CD4-positive, alpha-beta memory T cell (primary cell): ENCODE measurements at regions of chr6 and their contacts with region 1.

Region 1: GRCh38 chr6:29964887-29965562 is 22.7 kb downstream of the HLA-A start:
- DNase-seq: peak; percentile 77 to 94 (median 84)
- H3K4me3 ChIP-seq: peak overlapping the region; percentile 24 to 57
- H3K4me3 Mint-ChIP-seq: peak overlapping the region; percentile 82 to 96 (median 89)
- H3K27ac ChIP-seq: peak overlapping the region; percentile 65
- H3K27ac Mint-ChIP-seq: peak overlapping the region; percentile 89 to 99 (median 93)
- H3K4me1 ChIP-seq: peaks cover 50% of the 10 kb centered on the region
- H3K4me1 Mint-ChIP-seq: peaks cover 37 to 54% (median 46%) of the 10 kb centered on the region in 4 donors
- H3K27me3 ChIP-seq: no peaks in the 10 kb centered on the region
- H3K27me3 Mint-ChIP-seq: no peaks in the 10 kb centered on the region

Region 2: GRCh38 chr6:29723262-29723665 is 241.8 kb before region 1 on chr6 and contains the start of gene HLA-F:
- CTCF ChIA-PET with region 1: no interaction called
- POLR2A ChIA-PET with region 1: no interaction called
- intact Hi-C with region 1: loop called (anchors 5 kb)
- DNase-seq: peak; percentile 88 to 91 (median 90)
- H3K4me3 ChIP-seq: peak within 1 kb of the TSS; percentile 95
- H3K4me3 Mint-ChIP-seq: peak within 1 kb of the TSS; percentile 94 to 98 (median 96)
- H3K27ac ChIP-seq: peak within 1 kb of the TSS; percentile 100
- H3K27ac Mint-ChIP-seq: peak within 1 kb of the TSS; percentile 96 to 99 (median 98)
- H3K4me1 ChIP-seq: peaks cover 59% of the 10 kb centered on the region
- H3K4me1 Mint-ChIP-seq: peaks cover 33 to 76% (median 43%) of the 10 kb centered on the region in 4 donors
- H3K27me3 ChIP-seq: no peaks in the 10 kb centered on the region
- H3K27me3 Mint-ChIP-seq: no peaks in the 10 kb centered on the region
- total RNA-seq, gene HLA-F: 573 to 585 TPM

Region 3: DNA sequence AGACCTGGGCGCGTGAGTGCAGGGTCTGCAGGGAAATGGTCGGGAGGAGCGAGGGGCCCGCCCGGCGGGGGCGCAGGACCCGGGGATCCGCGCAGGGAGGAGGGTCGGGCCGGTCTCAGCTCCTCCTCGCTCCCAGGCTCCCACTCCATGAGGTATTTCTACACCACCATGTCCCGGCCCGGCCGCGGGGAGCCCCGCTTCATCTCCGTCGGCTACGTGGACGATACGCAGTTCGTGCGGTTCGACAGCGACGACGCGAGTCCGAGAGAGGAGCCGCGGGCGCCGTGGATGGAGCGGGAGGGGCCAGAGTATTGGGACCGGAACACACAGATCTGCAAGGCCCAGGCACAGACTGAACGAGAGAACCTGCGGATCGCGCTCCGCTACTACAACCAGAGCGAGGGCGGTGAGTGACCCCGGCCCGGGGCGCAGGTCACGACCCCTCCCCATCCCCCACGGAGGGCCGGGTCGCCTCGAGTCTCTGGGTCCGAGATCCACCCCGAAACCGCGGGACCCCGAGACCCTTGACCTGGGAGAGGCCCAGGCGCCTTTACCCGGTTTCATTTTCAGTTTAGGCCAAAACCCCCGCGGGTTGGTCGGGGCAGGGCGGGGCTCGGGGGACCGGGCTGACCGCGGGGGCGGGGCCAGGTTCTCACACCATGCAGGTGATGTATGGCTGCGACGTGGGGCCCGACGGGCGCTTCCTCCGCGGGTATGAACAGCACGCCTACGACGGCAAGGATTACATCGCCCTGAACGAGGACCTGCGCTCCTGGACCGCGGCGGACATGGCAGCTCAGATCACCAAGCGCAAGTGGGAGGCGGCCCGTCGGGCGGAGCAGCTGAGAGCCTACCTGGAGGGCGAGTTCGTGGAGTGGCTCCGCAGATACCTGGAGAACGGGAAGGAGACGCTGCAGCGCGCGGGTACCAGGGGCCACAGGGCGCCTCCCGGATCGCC is 76.9 kb before region 1 on chr6:
- CTCF ChIA-PET with region 1: no interaction called
- POLR2A ChIA-PET with region 1: interaction called, 16 read pairs
- intact Hi-C with region 1: loop called (anchors 1 kb)
- DNase-seq: peak; percentile 69 to 96 (median 83)
- H3K4me3 ChIP-seq: peak overlapping the region; percentile 6 to 60
- H3K4me3 Mint-ChIP-seq: peak overlapping the region; percentile 41 to 96 (median 90)
- H3K27ac ChIP-seq: peak overlapping the region; percentile 91
- H3K27ac Mint-ChIP-seq: peak overlapping the region in 6 of 7 donors; percentile 92 to 99 (median 97)
- H3K4me1 ChIP-seq: peaks cover 15% of the 10 kb centered on the region
- H3K4me1 Mint-ChIP-seq: peaks cover 0 to 69% (median 14%) of the 10 kb centered on the region in 4 donors
- H3K27me3 ChIP-seq: no peaks in the 10 kb centered on the region
- H3K27me3 Mint-ChIP-seq: no peaks in the 10 kb centered on the region

Region 4: DNA sequence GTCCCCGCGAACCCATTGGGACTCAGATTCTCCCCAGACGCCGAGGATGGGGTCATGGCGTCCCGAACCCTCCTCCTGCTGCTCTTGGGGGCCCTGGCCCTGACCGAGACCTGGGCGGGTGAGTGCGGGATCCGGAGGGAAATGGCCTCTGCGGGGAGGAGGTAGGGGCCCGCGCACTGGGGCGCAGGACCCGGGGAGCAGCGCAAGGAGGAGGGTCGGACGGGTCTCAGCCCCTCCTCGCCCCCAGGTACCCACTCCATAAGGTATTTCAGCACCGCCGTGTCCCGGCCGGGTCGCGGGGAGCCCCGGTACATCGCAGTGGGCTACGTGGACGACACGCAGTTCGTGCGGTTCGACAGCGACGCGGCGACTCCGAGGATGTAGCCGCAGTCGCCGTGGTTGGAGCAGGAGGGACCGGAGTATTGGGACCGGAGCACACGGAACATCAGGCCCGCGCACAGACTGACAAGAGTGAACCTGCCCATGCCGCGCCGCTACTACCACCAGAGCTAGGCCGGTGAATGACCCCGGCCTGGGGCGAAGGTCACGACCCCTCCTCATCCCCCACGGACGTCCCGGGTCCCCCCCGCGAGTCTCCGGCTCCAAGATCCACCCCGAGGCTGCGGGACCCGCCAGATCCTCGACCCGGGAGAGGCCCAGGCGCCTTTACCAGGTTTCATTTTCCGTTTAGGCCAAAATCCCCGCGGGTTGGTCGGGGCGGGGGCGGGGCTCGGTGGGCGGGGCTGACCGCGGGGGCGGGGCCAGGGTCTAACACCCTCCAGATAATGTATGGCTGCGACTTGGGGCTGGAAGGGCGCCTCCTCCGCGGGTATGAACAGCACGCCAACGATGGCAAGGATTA is 38.4 kb before region 1 on chr6:
- CTCF ChIA-PET with region 1: no interaction called
- POLR2A ChIA-PET with region 1: interaction called, 25 read pairs
- intact Hi-C with region 1: loop called (anchors 1 kb)
- DNase-seq: peak; percentile 75 to 95 (median 80)
- H3K4me3 ChIP-seq: peak overlapping the region; percentile 6 to 70
- H3K4me3 Mint-ChIP-seq: peak overlapping the region in 7 of 8 donors; percentile 90 to 97 (median 95)
- H3K27ac ChIP-seq: peak overlapping the region; percentile 99
- H3K27ac Mint-ChIP-seq: peak overlapping the region in 6 of 7 donors; percentile 84 to 100 (median 99)
- H3K4me1 ChIP-seq: peaks cover 15% of the 10 kb centered on the region
- H3K4me1 Mint-ChIP-seq: peaks cover 0 to 28% (median 11%) of the 10 kb centered on the region in 4 donors
- H3K27me3 ChIP-seq: no peaks in the 10 kb centered on the region
- H3K27me3 Mint-ChIP-seq: no peaks in the 10 kb centered on the region

Region 5: GRCh38 chr6:29953001-29953441 is 12.0 kb before region 1 on chr6:
- CTCF ChIA-PET with region 1: no interaction called
- POLR2A ChIA-PET with region 1: interaction called, 118 read pairs
- intact Hi-C with region 1: no loop called
- DNase-seq: no peak
- H3K4me3 ChIP-seq: no peak overlapping the region
- H3K4me3 Mint-ChIP-seq: no peak overlapping the region
- H3K27ac ChIP-seq: no peak overlapping the region
- H3K27ac Mint-ChIP-seq: peak overlapping the region in 1 of 7 donors; percentile 23
- H3K4me1 ChIP-seq: peaks cover 12% of the 10 kb centered on the region
- H3K4me1 Mint-ChIP-seq: peaks cover 19 to 37% (median 31%) of the 10 kb centered on the region in 4 donors
- H3K27me3 ChIP-seq: no peaks in the 10 kb centered on the region
- H3K27me3 Mint-ChIP-seq: no peaks in the 10 kb centered on the region

Region 6: GRCh38 chr6:30013291-30013922 is 48.4 kb after region 1 on chr6:
- CTCF ChIA-PET with region 1: interaction called, 3 read pairs
- POLR2A ChIA-PET with region 1: no interaction called
- intact Hi-C with region 1: loop called (anchors 5 kb)
- DNase-seq: peak; percentile 12 to 41 (median 32)
- H3K4me3 ChIP-seq: no peak overlapping the region
- H3K4me3 Mint-ChIP-seq: no peak overlapping the region
- H3K27ac ChIP-seq: no peak overlapping the region
- H3K27ac Mint-ChIP-seq: no peak overlapping the region
- H3K4me1 ChIP-seq: no peaks in the 10 kb centered on the region
- H3K4me1 Mint-ChIP-seq: no peaks in the 10 kb centered on the region
- H3K27me3 ChIP-seq: peaks cover 2% of the 10 kb centered on the region
- H3K27me3 Mint-ChIP-seq: peaks cover 6 to 14% of the 10 kb centered on the region in 2 donors

Region 7: DNA sequence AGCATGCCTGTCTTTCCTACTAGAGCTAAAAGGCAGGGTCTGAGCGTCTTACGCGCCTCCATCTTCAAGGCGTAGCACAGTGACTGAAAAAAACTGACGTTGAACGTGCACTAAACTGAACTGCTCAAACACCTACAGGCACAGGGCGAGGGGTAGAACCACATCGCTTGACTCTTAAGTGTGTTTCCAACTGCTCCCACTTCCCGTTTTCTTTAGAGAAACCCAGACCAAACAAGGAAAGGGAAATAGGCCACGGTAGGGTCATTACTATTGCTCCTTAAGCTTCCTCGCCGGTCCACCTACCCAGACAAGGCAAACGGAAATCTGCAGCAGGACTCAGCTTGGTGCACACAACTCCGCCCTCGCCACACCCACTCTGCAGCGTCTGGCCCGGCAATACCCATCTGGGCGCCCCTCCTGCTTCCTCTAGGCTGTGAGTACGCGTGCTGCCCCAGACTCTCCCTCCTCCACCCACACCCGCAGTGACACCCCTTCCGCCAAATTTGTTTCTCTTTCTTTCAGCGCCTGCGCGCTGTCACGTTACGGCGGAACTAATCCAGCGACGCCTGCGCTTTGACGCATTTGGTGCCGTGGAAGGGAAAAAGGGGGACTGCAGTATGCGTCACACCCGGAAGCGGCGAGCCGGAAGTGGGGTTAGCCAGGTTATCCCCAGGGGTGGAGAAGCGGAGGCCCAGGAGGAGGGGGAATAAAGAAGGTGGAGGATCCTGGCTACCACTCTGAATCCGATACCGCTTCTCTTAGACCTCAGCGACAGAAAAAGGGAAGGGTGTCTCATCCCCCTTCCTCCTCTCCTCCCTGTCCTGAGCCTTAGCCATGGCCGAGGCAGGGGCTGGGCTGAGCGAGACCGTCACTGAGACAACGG is 101.8 kb after region 1 on chr6 and contains the start of gene PPP1R11:
- CTCF ChIA-PET with region 1: no interaction called
- POLR2A ChIA-PET with region 1: interaction called, 13 read pairs
- intact Hi-C with region 1: loop called (anchors 2 kb)
- DNase-seq: peak; percentile 98 to 100 (median 99)
- H3K4me3 ChIP-seq: peak within 1 kb of the TSS; percentile 84 to 90
- H3K4me3 Mint-ChIP-seq: peak within 1 kb of the TSS; percentile 92 to 100 (median 97)
- H3K27ac ChIP-seq: peak within 1 kb of the TSS; percentile 99
- H3K27ac Mint-ChIP-seq: peak within 1 kb of the TSS; percentile 95 to 100 (median 99)
- H3K4me1 ChIP-seq: peaks cover 50% of the 10 kb centered on the region
- H3K4me1 Mint-ChIP-seq: peaks cover 35 to 75% (median 52%) of the 10 kb centered on the region in 4 donors
- H3K27me3 ChIP-seq: no peaks in the 10 kb centered on the region
- H3K27me3 Mint-ChIP-seq: peaks cover 4 to 6% of the 10 kb centered on the region in 2 donors
- total RNA-seq, gene PPP1R11: 65.2 to 66.2 TPM